ENCODE measurements at regions of chr5 and their contacts with region 1.

Region 1: GRCh38 chr5:103475629-103476240 is 86.9 kb downstream of the NUDT12 start:
- DNase-seq: no peak
- H3K4me3 ChIP-seq: no peak overlapping the region
- H3K27ac ChIP-seq: no peak overlapping the region
- H3K4me1 ChIP-seq: no peaks in the 10 kb centered on the region
- H3K27me3 ChIP-seq: no peaks in the 10 kb centered on the region
- CTCF ChIP-seq: peak; percentile 28 to 76 (median 62)
- POLR2A ChIP-seq: no peak

Region 2: DNA sequence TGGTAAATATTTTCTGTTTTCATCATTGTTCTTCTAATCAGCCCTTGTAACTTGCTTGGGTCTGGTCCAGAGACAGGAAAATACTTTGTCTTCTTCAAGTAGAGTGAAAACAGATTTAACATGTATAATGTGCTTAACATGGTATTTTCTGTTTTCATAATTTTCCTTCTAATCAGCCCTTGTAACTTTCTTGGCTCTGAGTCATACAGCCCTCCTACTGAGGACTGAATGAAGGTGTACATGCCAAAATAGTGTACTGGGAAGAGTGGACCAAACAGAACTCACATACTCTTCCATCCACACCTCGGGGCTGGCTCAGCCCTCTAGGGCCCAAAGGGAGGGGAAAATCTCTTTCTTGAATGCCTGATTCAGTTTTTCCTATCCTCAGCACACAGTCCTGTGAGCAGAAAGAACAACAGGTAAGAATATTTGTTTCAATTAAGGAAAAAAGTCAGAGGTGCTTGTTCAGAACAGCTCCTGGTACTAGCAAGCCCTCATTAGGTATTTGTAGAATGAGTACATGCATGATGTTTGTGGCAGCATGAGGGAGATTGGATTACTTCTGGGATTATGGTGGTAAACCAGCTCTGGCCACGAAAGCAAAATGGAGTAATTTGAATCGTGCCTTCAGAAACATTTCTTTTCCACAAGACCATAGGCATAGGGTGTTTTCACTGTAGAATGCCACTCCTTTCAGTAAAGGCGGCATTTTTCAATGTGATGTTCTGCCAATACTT is 241.3 kb before region 1 on chr5:
- intact Hi-C with region 1: loop called (anchors 2 kb)
- DNase-seq: no peak
- H3K4me3 ChIP-seq: no peak overlapping the region
- H3K27ac ChIP-seq: no peak overlapping the region
- H3K4me1 ChIP-seq: no peaks in the 10 kb centered on the region
- H3K27me3 ChIP-seq: no peaks in the 10 kb centered on the region
- CTCF ChIP-seq: no peak
- POLR2A ChIP-seq: no peak

Region 3: GRCh38 chr5:103245761-103246160 is 230.0 kb before region 1 on chr5:
- intact Hi-C with region 1: no loop called
- DNase-seq: no peak
- H3K4me3 ChIP-seq: no peak overlapping the region
- H3K27ac ChIP-seq: no peak overlapping the region
- H3K4me1 ChIP-seq: no peaks in the 10 kb centered on the region
- H3K27me3 ChIP-seq: no peaks in the 10 kb centered on the region
- CTCF ChIP-seq: no peak
- POLR2A ChIP-seq: no peak

Region 4: GRCh38 chr5:103280967-103281366 is 194.8 kb before region 1 on chr5:
- intact Hi-C with region 1: no loop called
- DNase-seq: no peak
- H3K4me3 ChIP-seq: no peak overlapping the region
- H3K27ac ChIP-seq: no peak overlapping the region
- H3K4me1 ChIP-seq: no peaks in the 10 kb centered on the region
- H3K27me3 ChIP-seq: no peaks in the 10 kb centered on the region
- CTCF ChIP-seq: no peak
- POLR2A ChIP-seq: no peak